ENCODE measurements at regions of chrX and their contacts with region 1.

Region 1: DNA sequence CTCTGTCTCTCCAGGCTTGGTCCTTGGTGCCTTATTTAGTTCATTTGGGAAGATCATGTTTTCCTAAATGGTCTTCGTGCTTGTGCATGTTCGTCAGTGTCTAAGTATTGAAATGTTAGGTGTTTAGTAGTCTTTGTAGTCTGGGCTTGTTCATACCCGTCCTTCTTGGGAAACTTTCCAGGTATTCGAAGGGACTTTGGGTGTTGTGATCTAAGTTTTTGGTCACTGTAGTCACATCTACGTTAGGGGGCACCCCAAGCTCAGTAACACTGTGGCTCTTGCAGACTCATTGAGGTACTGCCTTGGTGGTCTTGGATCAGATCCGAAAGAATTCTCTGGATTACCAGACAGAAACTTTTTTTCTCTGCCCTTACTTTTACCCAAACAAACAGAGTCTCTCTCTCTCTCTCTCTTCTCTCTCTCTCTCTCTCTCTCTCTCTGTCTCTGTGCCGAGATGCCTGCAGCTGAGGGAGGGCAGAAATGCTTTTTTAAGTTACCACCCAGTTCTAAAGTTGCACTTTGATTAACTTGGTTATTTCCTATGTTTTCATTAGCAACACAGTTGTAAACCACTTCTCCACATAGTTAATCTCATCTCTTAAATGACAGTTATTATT is 67.6 kb upstream of the SLC7A3 start:
- DNase-seq: peak; percentile 62
- H3K4me3 ChIP-seq: no peak overlapping the region
- H3K27ac ChIP-seq: no peak overlapping the region
- H3K4me1 ChIP-seq: no peaks in the 10 kb centered on the region
- H3K27me3 ChIP-seq: no peaks in the 10 kb centered on the region
- CTCF ChIP-seq: peak in 3 of 4 experiments; percentile 17 to 51 (median 49)
- POLR2A ChIP-seq: no peak

Region 2: GRCh38 chrX:71128915-71129765 is 130.6 kb after region 1 on chrX:
- intact Hi-C with region 1: loop called (anchors 10 kb)
- DNase-seq: peak; percentile 62
- H3K4me3 ChIP-seq: no peak overlapping the region
- H3K27ac ChIP-seq: no peak overlapping the region
- H3K4me1 ChIP-seq: no peaks in the 10 kb centered on the region
- H3K27me3 ChIP-seq: no peaks in the 10 kb centered on the region
- CTCF ChIP-seq: peak; percentile 48 to 71 (median 61)
- POLR2A ChIP-seq: no peak